GM13977 (cell line): ENCODE measurements at regions of chr2 and their contacts with region 1.

Region 1: DNA sequence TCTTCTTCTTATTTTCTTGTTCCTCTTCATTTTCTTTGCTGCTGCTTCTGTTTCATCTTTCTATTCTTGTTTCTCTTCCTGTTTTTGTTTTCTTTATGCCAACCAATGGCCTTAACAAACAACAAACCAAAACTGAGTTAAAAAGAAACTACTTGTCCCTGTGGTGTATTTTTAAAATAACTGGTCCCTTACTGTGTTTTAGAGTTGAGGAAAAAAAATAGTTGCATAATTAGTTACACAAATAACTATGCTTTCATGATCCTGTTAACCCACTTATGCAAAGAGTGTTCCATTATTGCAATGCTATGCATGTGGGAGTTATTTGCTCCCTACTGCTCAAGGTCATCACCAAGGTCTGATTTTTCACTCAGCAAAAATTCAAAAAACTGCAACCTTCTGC is 39.5 kb upstream of the IMP4 start:
- DNase-seq: no peak
- CTCF ChIP-seq: no peak

Region 2: DNA sequence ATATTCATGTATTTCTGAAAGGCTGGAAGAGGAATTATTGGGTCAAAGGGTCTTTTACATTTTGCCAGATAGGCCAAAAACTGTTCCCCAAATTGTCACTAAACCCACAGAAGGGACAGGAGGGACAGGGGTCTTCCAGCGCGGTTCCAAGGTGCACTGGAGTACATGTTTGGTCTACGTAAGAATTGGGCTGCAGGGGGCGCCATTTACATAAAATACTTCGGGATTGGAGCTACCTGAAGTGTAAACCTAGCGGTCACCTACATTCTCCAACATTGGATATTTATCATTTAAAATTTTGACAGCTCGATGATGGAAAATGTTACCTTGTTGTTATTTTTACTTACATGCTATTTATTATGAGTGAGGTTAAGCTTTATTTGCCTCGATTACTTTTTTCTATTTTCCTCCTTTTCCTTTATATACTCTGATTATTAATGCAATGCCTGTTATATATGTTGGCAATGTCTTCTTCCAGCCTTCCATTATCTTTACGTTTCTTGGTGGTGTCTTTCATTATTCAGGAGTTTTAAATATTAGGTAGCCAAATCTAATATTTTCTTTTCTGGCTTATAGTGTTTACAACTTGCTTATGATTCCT is 366.7 kb before region 1 on chr2:
- in situ Hi-C with region 1: loop called (anchors 25 kb)
- DNase-seq: peak; percentile 62
- CTCF ChIP-seq: peak; percentile 51

Region 3: DNA sequence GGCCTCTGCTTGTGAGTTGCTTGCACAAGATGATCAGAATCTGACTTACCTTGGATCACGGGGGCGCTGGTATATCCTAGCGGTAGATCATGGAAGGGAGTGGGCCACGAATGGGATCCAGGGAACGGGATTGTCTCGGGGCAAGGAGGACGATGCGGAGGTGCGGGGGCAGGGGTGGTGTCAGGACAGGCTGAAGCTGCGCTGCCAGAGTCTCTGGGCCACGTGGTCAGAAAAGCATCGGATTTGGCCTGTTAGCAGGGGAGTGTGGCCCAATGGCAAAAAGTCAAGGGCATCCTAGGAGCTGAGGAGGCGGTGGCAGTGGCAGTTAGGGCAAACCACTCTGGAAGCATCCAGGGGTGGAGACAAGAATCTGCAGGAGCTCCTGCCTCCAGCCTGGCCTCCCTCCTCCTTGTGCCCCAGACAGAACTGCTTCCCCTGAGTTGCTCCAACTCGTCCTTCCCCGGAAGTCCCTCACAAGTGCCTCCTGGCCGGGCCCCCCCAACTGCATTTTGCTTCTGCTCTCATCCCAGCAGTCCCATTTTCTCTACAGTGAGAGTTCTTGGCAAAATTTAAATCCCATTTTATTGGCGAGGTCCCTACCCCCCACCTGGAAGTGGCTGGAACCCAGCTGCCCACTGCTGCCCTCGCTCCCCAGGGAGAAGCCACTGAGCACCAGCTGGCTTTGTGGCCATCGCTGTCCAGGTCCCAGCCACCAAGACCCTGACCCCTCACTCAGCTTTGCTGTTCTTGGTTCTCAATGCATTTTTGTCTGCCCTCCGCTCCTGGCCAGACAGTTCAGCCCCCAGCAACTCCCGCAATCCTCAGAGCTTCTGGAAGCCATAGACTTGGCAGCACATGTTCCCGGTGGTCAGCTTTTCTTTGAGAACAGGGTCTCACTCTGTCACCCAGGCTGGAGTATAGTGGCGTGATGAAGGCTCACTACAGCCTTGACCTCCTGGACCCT is 152.7 kb before region 1 on chr2:
- in situ Hi-C with region 1: loop called (anchors 25 kb)
- DNase-seq: no peak
- CTCF ChIP-seq: no peak

Region 4: GRCh38 chr2:130797493-130798435 is 494.6 kb after region 1 on chr2:
- in situ Hi-C with region 1: no loop called
- DNase-seq: peak; percentile 92
- CTCF ChIP-seq: peak; percentile 99